ENCODE measurements at regions of chr2 and their contacts with region 1.

Region 1: GRCh38 chr2:182650704-182651103 is 65.4 kb upstream of the DNAJC10 start:
- DNase-seq: no peak
- H3K4me3 Mint-ChIP-seq: no peak overlapping the region
- H3K27ac Mint-ChIP-seq: no peak overlapping the region
- H3K4me1 Mint-ChIP-seq: peaks cover 10% of the 10 kb centered on the region
- H3K27me3 Mint-ChIP-seq: peaks cover 3% of the 10 kb centered on the region

Region 2: DNA sequence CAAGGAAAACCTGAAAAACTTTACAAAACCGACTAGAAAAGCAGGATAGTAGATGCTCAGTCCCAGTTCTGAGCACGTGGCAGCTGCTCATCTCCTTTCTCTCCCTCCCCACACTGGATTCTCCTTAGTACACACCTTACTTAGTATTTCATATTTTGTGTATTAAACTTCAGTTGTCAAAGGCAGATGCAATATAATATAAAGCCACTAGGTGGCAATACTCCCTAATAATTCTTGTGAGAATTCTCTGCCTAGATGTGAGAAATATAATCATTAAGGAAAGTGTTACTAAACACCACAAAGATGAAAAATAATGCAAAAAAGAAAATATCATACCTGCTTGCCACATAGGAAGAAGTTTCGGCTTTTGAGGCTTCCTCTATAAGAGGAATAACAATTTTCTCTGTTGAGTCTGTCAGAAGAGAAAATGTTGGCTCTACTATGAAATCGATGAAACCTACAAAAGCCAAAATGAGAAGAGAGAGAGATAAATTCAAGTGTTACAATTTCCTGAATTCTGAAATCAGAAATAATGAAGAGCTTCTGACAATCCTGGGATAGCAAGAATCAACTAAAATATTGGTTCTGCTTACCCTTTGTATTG is 464.5 kb before region 1 on chr2:
- CTCF ChIA-PET with region 1: interaction called, 22 read pairs
- POLR2A ChIA-PET with region 1: no interaction called
- intact Hi-C with region 1: loop called (anchors 1 kb)
- DNase-seq: no peak
- H3K4me3 Mint-ChIP-seq: no peak overlapping the region
- H3K27ac Mint-ChIP-seq: no peak overlapping the region
- H3K4me1 Mint-ChIP-seq: no peaks in the 10 kb centered on the region
- H3K27me3 Mint-ChIP-seq: peaks cover 5% of the 10 kb centered on the region

Region 3: DNA sequence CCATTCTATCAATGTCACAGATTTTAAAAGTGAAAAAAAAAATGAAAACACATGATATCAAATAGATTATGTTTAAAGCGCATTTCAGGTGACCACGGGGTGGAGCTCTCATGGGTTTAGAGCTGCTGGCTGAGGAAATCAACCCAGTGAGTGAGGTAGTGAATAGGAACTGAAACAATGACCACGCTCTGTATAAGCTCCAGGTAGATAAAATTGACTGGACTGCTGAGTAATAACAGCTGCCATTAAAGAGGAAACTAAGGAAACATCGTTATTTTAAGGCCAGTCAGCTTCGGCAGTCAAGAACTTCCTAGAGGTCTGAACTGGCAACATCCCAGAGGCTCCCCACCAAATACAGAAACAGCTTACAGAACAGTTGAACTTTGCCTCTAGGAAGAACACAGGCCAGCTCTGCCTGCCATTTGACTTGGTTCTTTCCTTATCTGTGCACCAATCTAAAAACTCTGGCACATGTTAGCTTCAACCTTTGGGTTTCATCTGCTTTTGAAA is 409.8 kb before region 1 on chr2:
- CTCF ChIA-PET with region 1: interaction called, 10 read pairs
- POLR2A ChIA-PET with region 1: no interaction called
- intact Hi-C with region 1: loop called (anchors 1 kb)
- DNase-seq: peak; percentile 28
- H3K4me3 Mint-ChIP-seq: no peak overlapping the region
- H3K27ac Mint-ChIP-seq: no peak overlapping the region
- H3K4me1 Mint-ChIP-seq: no peaks in the 10 kb centered on the region
- H3K27me3 Mint-ChIP-seq: no peaks in the 10 kb centered on the region

Region 4: DNA sequence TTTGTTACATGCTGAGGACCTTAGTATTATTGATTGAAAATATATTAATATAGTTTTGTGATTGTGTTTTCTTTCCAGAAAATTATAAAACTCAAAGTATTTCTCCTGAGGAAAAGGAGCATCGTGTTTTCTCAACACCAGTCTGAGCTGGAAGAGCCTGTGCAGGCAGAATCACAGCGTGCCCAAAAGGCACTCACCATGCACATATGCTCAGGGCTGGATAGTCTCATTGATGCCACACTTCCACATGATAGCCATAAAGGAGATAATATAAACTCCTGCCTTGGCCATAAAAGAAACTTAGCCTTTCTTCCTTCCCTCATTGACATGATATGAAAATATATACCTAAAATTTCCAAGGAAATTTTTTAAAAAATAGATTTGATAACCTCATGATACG is 227.8 kb before region 1 on chr2:
- CTCF ChIA-PET with region 1: no interaction called
- POLR2A ChIA-PET with region 1: no interaction called
- intact Hi-C with region 1: no loop called
- DNase-seq: no peak
- H3K4me3 Mint-ChIP-seq: no peak overlapping the region
- H3K27ac Mint-ChIP-seq: no peak overlapping the region
- H3K4me1 Mint-ChIP-seq: no peaks in the 10 kb centered on the region
- H3K27me3 Mint-ChIP-seq: no peaks in the 10 kb centered on the region

Measured in activated CD4-positive, alpha-beta memory T cell treated with anti-CD3 and anti-CD28 coated beads for 36 hours (primary cell).